Activated naive CD4-positive, alpha-beta T cell treated with anti-CD3 and anti-CD28 coated beads, Interleukin-2, amount 10 ng/mL, durations not matched to agents 7 days and 5 days (primary cell): ENCODE measurements at regions of chr17 and their contacts with region 1.

Region 1: DNA sequence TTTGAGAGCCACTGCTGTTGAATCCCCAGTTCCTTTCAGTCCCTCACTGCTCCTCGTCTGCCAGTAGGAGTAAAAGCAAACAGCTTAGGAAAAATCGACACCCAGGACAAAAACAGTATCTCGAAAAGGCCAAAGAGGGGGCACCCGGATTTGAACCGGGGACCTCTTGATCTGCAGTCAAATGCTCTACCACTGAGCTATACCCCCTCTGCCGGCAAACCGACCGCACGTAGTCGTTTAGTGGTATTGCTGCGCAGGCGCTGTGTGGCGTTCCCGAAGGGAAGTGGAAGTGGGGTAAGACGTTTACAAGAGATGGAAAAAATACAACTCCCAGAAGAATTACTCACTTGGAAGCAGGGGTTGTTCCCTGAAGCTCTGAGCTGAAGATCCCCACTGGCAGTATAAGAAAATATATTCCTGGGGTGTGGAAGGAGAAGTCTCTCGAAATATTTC is 2.2 kb upstream of the PLXDC1 start:
- DNase-seq: peak; percentile 94
- H3K4me3 Mint-ChIP-seq: peak overlapping the region; percentile 90
- H3K27ac Mint-ChIP-seq: peak overlapping the region; percentile 94
- H3K4me1 Mint-ChIP-seq: peaks cover 38% of the 10 kb centered on the region
- H3K27me3 Mint-ChIP-seq: peaks cover 83% of the 10 kb centered on the region

Region 2: DNA sequence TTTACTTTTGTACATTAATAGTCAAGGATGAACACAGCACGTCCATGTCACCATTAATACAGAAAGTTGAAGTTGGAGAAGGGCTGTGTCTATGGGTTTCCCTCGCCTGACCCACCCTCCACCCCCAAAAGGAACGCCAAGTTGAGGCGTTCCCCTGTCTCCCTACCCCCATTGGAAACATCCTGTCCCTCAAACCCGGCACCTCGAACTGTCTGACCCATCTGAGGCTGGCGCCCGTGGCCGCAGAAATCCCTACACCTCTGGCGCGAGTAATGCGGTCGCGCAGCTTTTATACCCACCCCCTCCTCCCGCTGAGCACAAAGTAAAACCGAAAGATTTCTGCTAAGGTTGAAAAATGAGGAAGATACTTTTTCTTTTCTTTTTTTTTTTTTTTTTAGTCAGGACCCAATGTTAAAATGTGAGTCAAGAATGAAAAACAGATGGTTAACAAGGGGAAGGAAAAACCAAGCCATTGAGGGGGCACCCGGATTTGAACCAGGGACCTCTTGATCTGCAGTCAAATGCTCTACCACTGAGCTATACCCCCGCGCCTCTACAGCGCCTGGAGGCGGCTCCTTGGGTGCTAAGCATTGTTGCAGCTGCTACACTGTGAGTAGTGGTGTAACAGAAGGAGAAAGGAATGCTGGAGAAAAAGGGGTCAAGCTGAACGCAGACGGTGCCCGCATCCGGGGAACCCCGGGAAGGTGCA is 284.7 kb before region 1 on chr17:
- CTCF ChIA-PET with region 1: interaction called, 35 read pairs
- DNase-seq: peak; percentile 88
- H3K4me3 Mint-ChIP-seq: peak overlapping the region; percentile 98
- H3K27ac Mint-ChIP-seq: peak overlapping the region; percentile 99
- H3K4me1 Mint-ChIP-seq: peaks cover 51% of the 10 kb centered on the region
- H3K27me3 Mint-ChIP-seq: peaks cover 16% of the 10 kb centered on the region

Region 3: DNA sequence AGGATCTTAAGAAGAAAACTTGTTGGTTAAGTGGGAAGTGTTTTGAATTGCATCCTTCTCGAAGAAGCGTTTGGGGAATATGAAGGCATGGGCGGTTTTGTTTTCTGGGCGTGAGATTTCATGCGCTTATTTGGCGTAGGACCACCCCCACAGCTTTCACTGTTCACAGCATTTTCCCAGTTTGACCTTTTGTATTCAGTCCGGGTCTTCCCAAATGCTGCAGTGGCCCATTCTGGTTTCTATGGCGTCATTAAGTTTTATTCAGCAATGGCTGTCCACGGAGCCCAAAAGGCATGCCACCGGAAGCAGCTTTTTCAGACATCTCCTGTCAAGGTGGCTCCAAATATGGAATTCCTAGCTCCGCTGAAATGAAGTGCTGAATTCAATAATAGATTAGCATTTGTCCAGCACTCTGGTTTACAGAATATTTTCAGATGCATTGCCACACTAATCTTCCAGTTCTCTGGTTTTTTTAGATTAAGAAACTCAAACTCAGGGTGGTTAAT is 95.9 kb before region 1 on chr17:
- CTCF ChIA-PET with region 1: interaction called, 13 read pairs
- DNase-seq: no peak
- H3K4me3 Mint-ChIP-seq: peak overlapping the region; percentile 81
- H3K27ac Mint-ChIP-seq: peak overlapping the region; percentile 90
- H3K4me1 Mint-ChIP-seq: peaks cover 32% of the 10 kb centered on the region
- H3K27me3 Mint-ChIP-seq: peaks cover 27% of the 10 kb centered on the region

Region 4: GRCh38 chr17:39094607-39095308 is 58.9 kb before region 1 on chr17:
- CTCF ChIA-PET with region 1: interaction called, 19 read pairs
- DNase-seq: peak; percentile 58
- H3K4me3 Mint-ChIP-seq: peak overlapping the region; percentile 70
- H3K27ac Mint-ChIP-seq: peak overlapping the region; percentile 96
- H3K4me1 Mint-ChIP-seq: peaks cover 90% of the 10 kb centered on the region
- H3K27me3 Mint-ChIP-seq: peaks cover 8% of the 10 kb centered on the region

Region 5: DNA sequence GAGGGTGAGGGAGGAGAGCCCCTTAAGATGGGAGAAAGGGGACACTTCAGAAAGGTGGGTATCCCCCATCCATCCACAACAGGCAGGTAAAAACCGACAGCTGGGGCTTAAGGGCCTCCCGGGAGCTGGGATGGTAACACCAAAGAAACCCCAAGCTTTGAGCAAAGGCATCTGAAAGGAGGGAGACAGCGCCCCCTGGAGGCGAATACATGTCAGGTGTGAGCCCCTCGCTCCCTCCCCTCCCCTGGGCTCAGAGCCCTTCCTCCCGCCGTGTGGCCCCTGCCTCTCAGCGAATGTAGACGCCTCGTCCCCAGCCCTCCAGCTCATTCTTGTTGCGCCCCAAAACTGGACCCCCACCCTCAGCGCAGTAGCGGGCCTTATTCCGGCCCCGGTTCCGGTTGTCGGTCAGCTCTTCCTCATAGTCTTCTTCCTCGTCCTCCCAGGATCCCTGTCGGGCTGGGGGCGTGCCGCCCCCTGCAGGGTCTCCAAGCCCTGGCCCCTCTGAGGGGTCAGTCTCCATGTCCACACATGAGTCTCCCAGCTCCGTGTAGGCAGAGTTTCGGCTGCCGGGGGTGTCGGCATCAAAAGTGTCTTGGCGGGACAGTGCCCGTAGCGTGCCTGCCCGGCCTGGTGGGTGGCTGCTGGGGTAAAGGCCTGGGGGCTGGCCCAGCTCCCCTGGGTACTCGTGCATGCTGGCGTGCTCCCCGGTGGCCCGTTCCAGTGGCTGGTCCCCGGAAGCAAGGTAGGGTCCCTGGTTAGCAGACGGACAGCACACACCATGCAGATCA is 21.5 kb after region 1 on chr17:
- CTCF ChIA-PET with region 1: interaction called, 30 read pairs
- DNase-seq: peak; percentile 86
- H3K4me3 Mint-ChIP-seq: no peak overlapping the region
- H3K27ac Mint-ChIP-seq: peak overlapping the region; percentile 37
- H3K4me1 Mint-ChIP-seq: peaks cover 26% of the 10 kb centered on the region
- H3K27me3 Mint-ChIP-seq: peaks cover 19% of the 10 kb centered on the region